ENCODE measurements at regions of chr3 and their contacts with region 1.

Region 1: DNA sequence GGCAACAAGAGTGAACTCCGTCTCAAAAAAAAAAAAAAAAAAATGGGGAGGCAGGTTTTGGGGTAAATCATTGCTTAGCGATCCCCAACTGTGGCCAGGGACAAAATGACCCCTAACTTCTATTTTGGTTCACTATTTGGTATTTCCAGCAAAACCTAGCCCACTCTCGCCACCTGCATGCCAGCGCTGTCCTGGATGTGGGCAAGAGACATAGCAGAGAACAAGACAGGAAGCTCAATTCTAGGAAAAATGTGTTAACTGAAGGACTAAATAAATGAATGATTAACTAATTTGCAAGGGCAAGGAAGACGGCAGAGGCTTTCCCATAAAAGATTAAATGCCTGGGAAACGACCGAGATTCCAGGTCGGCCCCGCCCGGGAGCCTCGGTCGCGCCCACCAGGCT is 425 bp downstream of the NICN1 start:
- DNase-seq: no peak
- H3K4me3 ChIP-seq: peak overlapping the region; percentile 83 to 92
- H3K27ac ChIP-seq: peak overlapping the region; percentile 91 to 93
- H3K4me1 ChIP-seq: peaks cover 0 to 7% of the 10 kb centered on the region in 2 donors
- H3K27me3 ChIP-seq: no peaks in the 10 kb centered on the region
- CTCF ChIP-seq: no peak

Region 2: GRCh38 chr3:49445381-49445780 is 16.7 kb after region 1 on chr3:
- intact Hi-C with region 1: loop called (anchors 1 kb)
- DNase-seq: no peak
- H3K4me3 ChIP-seq: no peak overlapping the region
- H3K27ac ChIP-seq: peak overlapping the region in 1 of 2 donors; percentile 9
- H3K4me1 ChIP-seq: peaks cover 0 to 11% of the 10 kb centered on the region in 2 donors
- H3K27me3 ChIP-seq: no peaks in the 10 kb centered on the region
- CTCF ChIP-seq: no peak

Region 3: DNA sequence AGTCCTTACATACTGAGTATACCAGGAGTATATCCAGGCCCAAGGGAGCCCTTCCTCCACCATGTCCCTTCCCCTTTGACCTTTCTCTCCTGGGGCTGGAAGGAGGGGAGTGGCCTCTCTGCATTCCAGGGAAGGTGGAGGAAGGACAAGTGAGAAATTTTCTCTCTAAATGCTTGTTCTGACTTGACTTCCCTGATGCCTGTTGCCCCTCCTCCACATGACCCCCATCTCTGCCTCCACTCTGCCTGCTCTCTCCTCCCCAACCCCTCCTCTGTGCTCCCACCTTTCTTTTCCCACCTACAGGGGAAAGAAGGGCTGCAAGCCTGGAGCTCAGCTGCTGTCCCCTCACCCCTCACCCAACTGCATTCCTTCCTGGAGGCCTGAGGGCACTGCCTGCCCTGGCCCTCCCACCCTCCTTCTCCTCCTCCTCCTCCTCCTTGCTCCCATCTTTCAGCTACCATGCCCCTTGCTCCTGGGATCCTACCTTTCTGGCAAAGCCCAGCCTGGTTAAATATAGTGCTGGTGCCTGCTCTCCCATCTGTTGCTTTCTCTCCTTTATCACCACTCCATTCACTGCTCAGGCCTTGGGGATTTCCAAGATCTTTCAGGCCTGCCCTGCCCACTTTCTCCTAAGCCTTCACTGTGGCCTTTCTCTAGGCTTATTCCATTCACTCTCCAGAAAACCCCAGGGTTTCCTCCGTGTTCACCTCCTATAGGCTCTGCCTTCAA is 32.9 kb after region 1 on chr3:
- intact Hi-C with region 1: no loop called
- DNase-seq: no peak
- H3K4me3 ChIP-seq: no peak overlapping the region
- H3K27ac ChIP-seq: peak overlapping the region in 1 of 2 donors; percentile 18
- H3K4me1 ChIP-seq: no peaks in the 10 kb centered on the region
- H3K27me3 ChIP-seq: no peaks in the 10 kb centered on the region
- CTCF ChIP-seq: no peak

Region 4: GRCh38 chr3:49534581-49535441 is 106.1 kb after region 1 on chr3:
- intact Hi-C with region 1: no loop called
- DNase-seq: no peak
- H3K4me3 ChIP-seq: no peak overlapping the region
- H3K27ac ChIP-seq: no peak overlapping the region
- H3K4me1 ChIP-seq: no peaks in the 10 kb centered on the region
- H3K27me3 ChIP-seq: no peaks in the 10 kb centered on the region
- CTCF ChIP-seq: no peak

Region 5: DNA sequence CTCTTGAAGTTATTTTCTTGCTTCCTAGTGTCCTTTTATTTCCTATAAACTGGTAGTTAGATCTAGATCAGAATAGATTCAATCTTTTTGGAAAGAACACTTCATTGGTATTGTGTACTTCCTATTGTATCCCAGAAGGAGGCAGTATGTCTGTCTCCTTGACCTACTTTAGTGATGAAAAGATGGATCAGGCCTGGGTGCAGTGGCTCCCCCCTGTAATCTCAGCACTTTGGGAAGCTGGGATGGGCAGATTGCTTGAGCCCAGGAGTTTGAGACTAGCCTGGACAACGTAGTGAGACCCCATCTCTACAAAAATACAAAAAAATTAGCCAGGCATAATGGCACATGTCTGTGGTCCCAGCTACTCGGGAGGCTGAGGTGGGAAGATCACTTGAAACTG is 137.6 kb after region 1 on chr3:
- intact Hi-C with region 1: no loop called
- DNase-seq: no peak
- H3K4me3 ChIP-seq: no peak overlapping the region
- H3K27ac ChIP-seq: no peak overlapping the region
- H3K4me1 ChIP-seq: no peaks in the 10 kb centered on the region
- H3K27me3 ChIP-seq: no peaks in the 10 kb centered on the region
- CTCF ChIP-seq: no peak